Naive thymus-derived CD4-positive, alpha-beta T cell (primary cell): ENCODE measurements at regions of chr11 and their contacts with region 1.

Region 1: GRCh38 chr11:14892036-14892567 is at the start of gene CYP2R1:
- DNase-seq: peak in 8 of 9 donors; percentile 76 to 91 (median 89)
- ATAC-seq: peak; percentile 93
- H3K4me3 ChIP-seq: peak within 1 kb of the TSS; percentile 83
- H3K4me3 Mint-ChIP-seq: peak within 1 kb of the TSS; percentile 88 to 99 (median 96)
- H3K27ac ChIP-seq: peak within 1 kb of the TSS; percentile 80
- H3K27ac Mint-ChIP-seq: peak within 1 kb of the TSS; percentile 91 to 98 (median 96)
- H3K4me1 ChIP-seq: peaks cover 3 to 27% of the 10 kb centered on the region in 2 donors
- H3K4me1 Mint-ChIP-seq: peaks cover 17 to 66% (median 44%) of the 10 kb centered on the region in 7 donors
- H3K27me3 ChIP-seq: no peaks in the 10 kb centered on the region
- H3K27me3 Mint-ChIP-seq: no peaks in the 10 kb centered on the region
- total RNA-seq, gene CYP2R1: 13.3 to 18.6 (median 14.7) TPM

Region 2: DNA sequence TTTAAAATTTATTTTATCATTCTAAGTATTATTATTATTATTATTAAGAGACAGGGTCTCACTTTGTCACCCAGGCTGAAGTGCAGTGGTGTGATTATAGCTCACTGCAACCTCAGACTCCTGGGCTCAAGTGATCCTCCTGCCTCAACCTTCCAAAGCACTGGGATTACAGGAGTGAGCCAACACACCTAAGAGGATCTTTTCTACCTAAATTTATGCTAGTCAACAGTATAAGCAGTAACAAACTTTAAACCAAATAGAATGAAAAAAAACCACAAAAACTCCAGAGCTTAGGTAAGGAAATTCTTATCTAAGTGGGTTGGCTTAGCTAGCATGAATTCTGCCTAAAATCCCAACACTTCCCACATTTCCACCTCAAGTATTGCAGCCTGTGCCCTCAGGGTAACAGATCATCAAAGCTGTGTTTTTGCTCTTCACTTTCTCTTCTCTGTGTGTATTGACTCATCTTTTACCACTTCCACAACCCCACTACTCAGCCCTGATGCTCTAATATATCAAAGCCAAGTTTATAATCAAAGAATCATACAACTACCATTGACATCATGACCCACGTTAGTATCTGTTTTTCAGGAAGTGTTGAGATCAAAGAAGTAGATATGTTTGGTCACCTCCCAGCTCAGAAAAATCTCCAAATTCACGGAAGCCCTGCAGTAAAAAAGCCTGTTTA is 1023.2 kb before region 1 on chr11:
- CTCF ChIA-PET with region 1: no interaction called
- POLR2A ChIA-PET with region 1: interaction called, 3 read pairs
- intact Hi-C with region 1: loop called in 1 of 2 experiments (anchors 10 kb)
- DNase-seq: peak in 7 of 9 donors; percentile 73 to 92 (median 88)
- ATAC-seq: peak; percentile 96
- H3K4me3 ChIP-seq: no peak overlapping the region
- H3K4me3 Mint-ChIP-seq: peak overlapping the region in 9 of 10 donors; percentile 2 to 70 (median 40)
- H3K27ac ChIP-seq: peak overlapping the region; percentile 87
- H3K27ac Mint-ChIP-seq: peak overlapping the region; percentile 86 to 97 (median 92)
- H3K4me1 ChIP-seq: peaks cover 9 to 19% of the 10 kb centered on the region in 2 donors
- H3K4me1 Mint-ChIP-seq: peaks cover 19 to 56% (median 43%) of the 10 kb centered on the region in 7 donors
- H3K27me3 ChIP-seq: no peaks in the 10 kb centered on the region
- H3K27me3 Mint-ChIP-seq: peaks cover 0 to 14% (median 0%) of the 10 kb centered on the region in 5 donors

Region 3: GRCh38 chr11:14499554-14500180 is 392.4 kb before region 1 on chr11 and contains the start of gene COPB1:
- CTCF ChIA-PET with region 1: no interaction called
- POLR2A ChIA-PET with region 1: interaction called, 22 read pairs
- intact Hi-C with region 1: loop called (anchors 1 kb)
- DNase-seq: peak; percentile 82 to 94 (median 92)
- ATAC-seq: peak; percentile 99
- H3K4me3 ChIP-seq: peak within 1 kb of the TSS; percentile 70
- H3K4me3 Mint-ChIP-seq: peak within 1 kb of the TSS; percentile 79 to 98 (median 92)
- H3K27ac ChIP-seq: peak within 1 kb of the TSS; percentile 91
- H3K27ac Mint-ChIP-seq: peak within 1 kb of the TSS; percentile 87 to 98 (median 94)
- H3K4me1 ChIP-seq: peaks cover 0 to 21% of the 10 kb centered on the region in 2 donors
- H3K4me1 Mint-ChIP-seq: peaks cover 27 to 54% (median 47%) of the 10 kb centered on the region in 7 donors
- H3K27me3 ChIP-seq: no peaks in the 10 kb centered on the region
- H3K27me3 Mint-ChIP-seq: no peaks in the 10 kb centered on the region
- total RNA-seq, gene COPB1: 73.4 to 102 (median 75.9) TPM

Region 4: GRCh38 chr11:14537134-14537599 is 354.9 kb before region 1 on chr11:
- CTCF ChIA-PET with region 1: no interaction called
- POLR2A ChIA-PET with region 1: interaction called, 3 read pairs
- intact Hi-C with region 1: loop called in 1 of 2 experiments (anchors 5 kb)
- DNase-seq: peak in 7 of 9 donors; percentile 39 to 74 (median 69)
- ATAC-seq: peak; percentile 93
- H3K4me3 ChIP-seq: no peak overlapping the region
- H3K4me3 Mint-ChIP-seq: peak overlapping the region in 9 of 10 donors; percentile 48 to 86 (median 79)
- H3K27ac ChIP-seq: peak overlapping the region; percentile 69
- H3K27ac Mint-ChIP-seq: peak overlapping the region; percentile 77 to 99 (median 90)
- H3K4me1 ChIP-seq: peaks cover 0 to 17% of the 10 kb centered on the region in 2 donors
- H3K4me1 Mint-ChIP-seq: peaks cover 9 to 51% (median 45%) of the 10 kb centered on the region in 7 donors
- H3K27me3 ChIP-seq: no peaks in the 10 kb centered on the region
- H3K27me3 Mint-ChIP-seq: no peaks in the 10 kb centered on the region

Region 5: DNA sequence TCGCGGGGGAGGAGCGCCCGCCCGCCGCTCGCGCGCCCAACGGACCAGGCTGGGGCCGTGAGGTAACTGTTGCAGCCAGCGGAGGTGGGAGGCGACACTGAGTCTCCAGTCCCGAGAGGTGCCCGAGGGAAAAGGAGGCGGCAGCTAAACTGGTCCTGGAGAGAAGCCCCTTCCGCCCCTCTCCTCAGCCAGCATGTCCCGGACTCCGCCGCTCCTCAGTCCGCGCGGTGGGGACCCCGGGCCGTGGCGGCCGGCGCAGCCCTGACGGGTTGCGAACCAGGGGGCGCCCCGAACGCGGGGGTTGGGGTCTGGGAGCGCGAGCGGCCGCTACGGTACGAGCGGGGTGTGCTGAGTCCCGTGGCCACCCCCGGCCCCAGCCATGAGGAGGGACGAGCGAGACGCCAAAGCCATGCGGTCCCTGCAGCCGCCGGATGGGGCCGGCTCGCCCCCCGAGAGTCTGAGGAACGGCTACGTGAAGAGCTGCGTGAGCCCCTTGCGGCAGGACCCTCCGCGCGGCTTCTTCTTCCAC is 248.3 kb before region 1 on chr11 and contains the start of gene PDE3B:
- CTCF ChIA-PET with region 1: no interaction called
- POLR2A ChIA-PET with region 1: interaction called, 5 read pairs
- intact Hi-C with region 1: loop called (anchors 1 kb)
- DNase-seq: peak; percentile 45 to 79 (median 61)
- ATAC-seq: peak; percentile 78
- H3K4me3 ChIP-seq: peak within 1 kb of the TSS; percentile 68
- H3K4me3 Mint-ChIP-seq: peak within 1 kb of the TSS; percentile 90 to 99 (median 94)
- H3K27ac ChIP-seq: peak within 1 kb of the TSS; percentile 89
- H3K27ac Mint-ChIP-seq: peak within 1 kb of the TSS; percentile 69 to 95 (median 92)
- H3K4me1 ChIP-seq: peaks cover 26 to 33% of the 10 kb centered on the region in 2 donors
- H3K4me1 Mint-ChIP-seq: peaks cover 22 to 65% (median 49%) of the 10 kb centered on the region in 7 donors
- H3K27me3 ChIP-seq: no peaks in the 10 kb centered on the region
- H3K27me3 Mint-ChIP-seq: no peaks in the 10 kb centered on the region
- total RNA-seq, gene PDE3B: 79.6 to 268 (median 151) TPM

Region 6: DNA sequence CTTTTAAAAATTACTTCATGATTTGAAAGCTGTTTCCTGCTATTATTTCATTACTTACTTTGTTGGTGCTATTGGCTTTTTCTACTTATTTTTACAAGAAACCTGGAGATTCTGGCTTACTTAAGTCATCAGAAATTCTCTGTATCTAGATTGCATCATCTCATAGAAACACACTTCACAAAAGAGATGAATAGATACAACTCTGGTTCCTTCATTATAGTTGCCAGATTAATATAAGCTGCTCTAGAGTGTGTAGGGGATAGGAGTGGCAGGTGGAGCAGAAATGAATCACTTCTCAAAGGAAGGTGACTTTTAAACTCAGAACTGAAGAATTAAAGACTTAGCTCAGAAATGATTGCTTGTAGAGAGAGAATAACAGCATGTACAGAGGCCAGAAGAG is 20.1 kb before region 1 on chr11:
- CTCF ChIA-PET with region 1: no interaction called
- POLR2A ChIA-PET with region 1: interaction called, 6 read pairs
- intact Hi-C with region 1: loop called in 1 of 2 experiments (anchors 1 kb)
- DNase-seq: no peak
- ATAC-seq: no peak
- H3K4me3 ChIP-seq: no peak overlapping the region
- H3K4me3 Mint-ChIP-seq: no peak overlapping the region
- H3K27ac ChIP-seq: no peak overlapping the region
- H3K27ac Mint-ChIP-seq: peak overlapping the region in 4 of 9 donors; percentile 3 to 62 (median 34)
- H3K4me1 ChIP-seq: no peaks in the 10 kb centered on the region
- H3K4me1 Mint-ChIP-seq: peaks cover 5 to 25% (median 13%) of the 10 kb centered on the region in 7 donors
- H3K27me3 ChIP-seq: no peaks in the 10 kb centered on the region
- H3K27me3 Mint-ChIP-seq: no peaks in the 10 kb centered on the region

Region 7: DNA sequence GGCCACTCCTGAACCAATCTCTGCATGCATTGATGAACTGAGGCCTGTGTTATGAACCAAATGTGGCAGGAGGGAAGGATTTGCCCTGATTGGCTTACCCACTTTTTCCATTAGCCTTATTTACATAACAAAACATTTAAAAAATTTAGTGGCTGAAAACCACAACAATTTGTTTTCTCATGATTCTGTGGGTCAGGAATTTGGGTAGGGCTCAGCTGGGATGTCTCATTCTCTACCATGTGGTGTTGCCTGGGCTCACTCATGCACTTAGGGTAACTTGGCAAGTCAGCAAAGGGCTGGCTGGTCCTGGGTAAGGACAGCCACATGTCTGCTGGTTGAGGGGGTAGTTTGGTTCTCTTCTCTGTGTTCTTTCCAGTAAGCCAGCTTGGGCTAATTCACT is 35.0 kb after region 1 on chr11:
- CTCF ChIA-PET with region 1: no interaction called
- POLR2A ChIA-PET with region 1: no interaction called
- intact Hi-C with region 1: no loop called
- DNase-seq: no peak
- ATAC-seq: no peak
- H3K4me3 ChIP-seq: no peak overlapping the region
- H3K4me3 Mint-ChIP-seq: no peak overlapping the region
- H3K27ac ChIP-seq: no peak overlapping the region
- H3K27ac Mint-ChIP-seq: no peak overlapping the region
- H3K4me1 ChIP-seq: no peaks in the 10 kb centered on the region
- H3K4me1 Mint-ChIP-seq: no peaks in the 10 kb centered on the region
- H3K27me3 ChIP-seq: no peaks in the 10 kb centered on the region
- H3K27me3 Mint-ChIP-seq: no peaks in the 10 kb centered on the region